ENCODE measurements at regions of chr11 and their contacts with region 1.

Region 1: GRCh38 chr11:66616379-66617154 is at the start of gene RBM14:
- DNase-seq: peak; percentile 99 to 100
- ATAC-seq: peak; percentile 96 to 98
- H3K4me3 ChIP-seq: peak within 1 kb of the TSS; percentile 60
- H3K27ac ChIP-seq: peak within 1 kb of the TSS; percentile 95 to 97
- H3K4me1 ChIP-seq: peaks cover 29% of the 10 kb centered on the region
- CTCF ChIP-seq: no peak
- EP300 ChIP-seq: no peak
- POLR2A ChIP-seq: peak; percentile 94
- RAD21 ChIP-seq: no peak
- polyA plus RNA-seq, gene RBM14: 33.0 and 38.0 TPM in 2 replicates

Region 2: GRCh38 chr11:66545701-66546367 is 70.7 kb before region 1 on chr11 and contains the start of gene ZDHHC24:
- CTCF ChIA-PET with region 1: no interaction called
- POLR2A ChIA-PET with region 1: interaction called, 10 read pairs
- DNase-seq: peak; percentile 97
- ATAC-seq: peak; percentile 89 to 98
- H3K4me3 ChIP-seq: peak within 1 kb of the TSS; percentile 85
- H3K27ac ChIP-seq: peak within 1 kb of the TSS; percentile 85 to 96
- H3K4me1 ChIP-seq: peaks cover 17% of the 10 kb centered on the region
- CTCF ChIP-seq: no peak
- EP300 ChIP-seq: no peak
- POLR2A ChIP-seq: peak; percentile 71
- RAD21 ChIP-seq: no peak
- polyA plus RNA-seq, gene ZDHHC24: 8.4 and 8.6 TPM in 2 replicates

Region 3: DNA sequence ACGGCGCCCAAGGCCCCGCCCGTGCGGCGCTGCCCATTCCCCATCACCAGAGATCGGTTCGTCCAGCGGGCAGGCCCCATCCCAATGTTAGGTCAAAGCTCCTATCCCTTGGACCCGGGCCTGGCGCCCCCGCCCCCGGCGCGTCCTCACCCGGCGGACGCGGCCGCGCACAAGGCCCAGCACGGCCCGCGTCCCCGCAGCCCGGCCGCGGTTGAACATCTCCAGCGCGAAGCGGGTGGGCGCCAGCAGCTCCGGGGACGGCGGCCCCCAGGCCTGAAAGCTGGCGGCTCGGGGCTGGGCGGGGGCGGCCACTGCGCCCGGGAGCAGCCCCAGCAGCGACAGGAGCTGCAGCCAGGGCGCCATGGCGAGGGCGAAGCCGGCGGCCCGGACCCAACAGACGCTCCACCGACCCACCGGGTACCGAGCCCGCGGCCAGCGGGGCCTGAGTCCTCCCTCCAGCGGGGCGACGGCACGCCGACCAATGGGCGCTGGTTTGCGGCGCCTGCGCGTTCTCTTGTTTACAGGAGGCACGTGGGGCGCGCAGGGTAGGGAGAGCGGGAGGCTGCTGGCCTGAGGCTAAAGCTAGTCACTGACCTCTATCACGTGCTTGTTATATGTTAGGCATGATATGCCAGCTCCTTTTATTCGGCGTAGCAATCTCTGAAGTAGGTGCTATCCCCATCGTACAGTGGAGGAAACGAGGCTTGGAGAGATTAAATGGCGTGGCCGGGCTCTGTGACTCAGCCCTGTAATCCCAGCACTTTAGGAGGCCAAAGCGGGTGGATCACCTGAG is 48.2 kb before region 1 on chr11 and contains the start of gene CTSF:
- CTCF ChIA-PET with region 1: interaction called, 3 read pairs
- POLR2A ChIA-PET with region 1: interaction called, 10 read pairs
- DNase-seq: peak; percentile 83 to 97
- ATAC-seq: peak; percentile 92 to 95
- H3K4me3 ChIP-seq: peak within 1 kb of the TSS; percentile 68
- H3K27ac ChIP-seq: peak within 1 kb of the TSS; percentile 80 to 87
- H3K4me1 ChIP-seq: peaks cover 5% of the 10 kb centered on the region; the same call in 1 of the 3 replicates
- CTCF ChIP-seq: no peak
- EP300 ChIP-seq: no peak
- POLR2A ChIP-seq: peak; percentile 53
- RAD21 ChIP-seq: no peak
- polyA plus RNA-seq, gene CTSF: 19.2 and 29.1 TPM in 2 replicates

Region 4: DNA sequence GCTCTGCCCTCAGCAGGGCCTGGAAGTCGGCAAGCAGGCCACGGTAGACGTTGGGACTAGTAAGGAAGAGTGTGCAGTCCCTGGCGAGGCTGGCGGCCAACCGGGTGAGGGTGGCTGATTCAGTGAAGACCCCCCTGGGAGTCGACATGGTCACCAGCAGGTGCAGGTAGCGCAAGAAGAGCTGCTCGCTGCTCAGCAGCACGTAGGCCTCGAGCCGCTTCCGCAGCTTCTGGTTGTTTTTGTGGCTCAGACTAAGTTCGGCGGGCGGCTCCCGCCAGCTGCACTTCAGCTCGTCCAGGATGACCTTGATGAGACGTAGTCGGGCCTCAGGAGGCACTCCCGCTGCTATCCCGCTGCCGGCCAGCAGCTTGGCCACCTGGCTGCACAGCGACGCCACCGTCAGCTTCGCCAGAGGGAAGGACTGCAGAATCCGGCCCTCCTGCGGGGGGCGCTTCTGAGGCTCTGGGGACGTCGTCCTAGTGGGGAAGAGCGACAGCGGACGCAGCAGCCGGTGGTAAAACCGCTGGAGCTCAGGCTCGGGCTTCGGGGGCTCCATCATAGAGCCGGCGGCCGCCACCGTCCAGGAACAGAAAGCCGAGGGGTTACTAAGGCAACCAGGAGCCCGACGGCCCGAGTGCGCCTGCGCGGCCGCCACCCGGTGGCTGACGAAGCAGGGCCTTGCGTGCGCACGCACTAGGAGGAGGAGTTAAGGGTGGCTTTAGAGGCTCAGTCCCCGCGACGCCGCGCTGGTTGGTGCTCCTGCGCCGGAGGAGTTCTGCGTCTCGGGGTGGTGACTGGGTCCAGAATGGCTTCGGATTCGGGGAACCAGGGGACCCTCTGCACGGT is 23.9 kb before region 1 on chr11 and contains the starts of genes CCDC87 and CCS:
- CTCF ChIA-PET with region 1: interaction called, 5 read pairs
- POLR2A ChIA-PET with region 1: interaction called, 26 read pairs
- DNase-seq: peak; percentile 96 to 100
- ATAC-seq: peak; percentile 98
- H3K4me3 ChIP-seq: peak within 1 kb of the TSS; percentile 68
- H3K27ac ChIP-seq: peak within 1 kb of the TSS; percentile 89 to 91
- H3K4me1 ChIP-seq: peaks cover 9% of the 10 kb centered on the region; the same call in 2 of the 3 replicates
- CTCF ChIP-seq: peak; percentile 68
- EP300 ChIP-seq: no peak
- POLR2A ChIP-seq: peak; percentile 99
- RAD21 ChIP-seq: peak in 1 of 2 experiments; percentile 45; a peak in 3 of 5 replicates
- polyA plus RNA-seq, gene CCDC87: 0.47 and 0.54 TPM in 2 replicates
- polyA plus RNA-seq, gene CCS: 17.2 and 18.3 TPM in 2 replicates

Region 5: DNA sequence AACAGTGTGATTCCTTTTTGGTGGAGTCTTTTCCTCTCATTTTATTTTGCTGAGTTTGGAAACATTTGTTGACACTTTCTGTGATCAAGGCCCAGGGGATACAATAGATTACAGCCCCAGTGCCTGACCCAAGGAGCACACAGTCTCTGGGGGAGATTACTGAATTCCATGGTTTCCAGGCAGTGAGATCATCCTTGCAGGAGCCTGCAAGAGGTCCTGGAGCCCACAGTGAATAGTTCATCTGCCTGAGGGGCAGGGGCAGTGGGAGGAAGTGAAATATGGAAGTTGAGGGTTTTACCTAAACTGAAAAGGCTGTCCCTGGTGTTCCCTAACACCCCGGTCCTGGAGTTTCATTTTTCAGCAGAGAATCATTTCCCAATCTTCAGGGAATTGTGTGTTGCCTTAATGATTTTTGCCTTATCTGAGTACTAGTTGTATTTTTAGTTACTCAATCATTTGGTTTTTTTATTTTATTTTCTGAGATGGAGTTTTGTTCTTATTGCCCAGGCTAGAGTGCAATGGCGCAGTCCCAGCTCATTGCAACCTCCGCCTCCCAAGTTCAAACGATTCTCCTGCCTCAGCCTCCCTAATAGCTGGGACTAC is 15.8 kb before region 1 on chr11:
- CTCF ChIA-PET with region 1: interaction called, 4 read pairs
- POLR2A ChIA-PET with region 1: interaction called, 44 read pairs
- DNase-seq: no peak
- ATAC-seq: no peak
- H3K4me3 ChIP-seq: no peak overlapping the region
- H3K27ac ChIP-seq: no peak overlapping the region
- H3K4me1 ChIP-seq: 0 out of 3 replicates have a peak, but pooled peaks cover 3% of the 10 kb centered on the region
- CTCF ChIP-seq: no peak
- EP300 ChIP-seq: no peak
- POLR2A ChIP-seq: no peak
- RAD21 ChIP-seq: no peak

Region 6: GRCh38 chr11:66638177-66639065 is 21.9 kb after region 1 on chr11 and contains the start of gene RBM4:
- CTCF ChIA-PET with region 1: interaction called, 8 read pairs
- POLR2A ChIA-PET with region 1: interaction called, 60 read pairs
- DNase-seq: peak; percentile 99 to 100
- ATAC-seq: peak; percentile 95
- H3K4me3 ChIP-seq: peak within 1 kb of the TSS; percentile 71
- H3K27ac ChIP-seq: peak within 1 kb of the TSS; percentile 88 to 91
- H3K4me1 ChIP-seq: peaks cover 44% of the 10 kb centered on the region
- CTCF ChIP-seq: 0 out of 3 replicates have a peak, but pooled peaks have one; percentile 6
- EP300 ChIP-seq: no peak
- POLR2A ChIP-seq: peak; percentile 73
- RAD21 ChIP-seq: no peak
- polyA plus RNA-seq, gene RBM4: 190 and 264 TPM in 2 replicates

Region 7: GRCh38 chr11:66697988-66698387 is 81.4 kb after region 1 on chr11:
- CTCF ChIA-PET with region 1: no interaction called
- POLR2A ChIA-PET with region 1: no interaction called
- DNase-seq: no peak
- ATAC-seq: no peak
- H3K4me3 ChIP-seq: no peak overlapping the region
- H3K27ac ChIP-seq: no peak overlapping the region
- H3K4me1 ChIP-seq: peaks cover 5% of the 10 kb centered on the region; the same call in 1 of the 3 replicates
- CTCF ChIP-seq: no peak
- EP300 ChIP-seq: no peak
- POLR2A ChIP-seq: no peak
- RAD21 ChIP-seq: no peak

Region 8: DNA sequence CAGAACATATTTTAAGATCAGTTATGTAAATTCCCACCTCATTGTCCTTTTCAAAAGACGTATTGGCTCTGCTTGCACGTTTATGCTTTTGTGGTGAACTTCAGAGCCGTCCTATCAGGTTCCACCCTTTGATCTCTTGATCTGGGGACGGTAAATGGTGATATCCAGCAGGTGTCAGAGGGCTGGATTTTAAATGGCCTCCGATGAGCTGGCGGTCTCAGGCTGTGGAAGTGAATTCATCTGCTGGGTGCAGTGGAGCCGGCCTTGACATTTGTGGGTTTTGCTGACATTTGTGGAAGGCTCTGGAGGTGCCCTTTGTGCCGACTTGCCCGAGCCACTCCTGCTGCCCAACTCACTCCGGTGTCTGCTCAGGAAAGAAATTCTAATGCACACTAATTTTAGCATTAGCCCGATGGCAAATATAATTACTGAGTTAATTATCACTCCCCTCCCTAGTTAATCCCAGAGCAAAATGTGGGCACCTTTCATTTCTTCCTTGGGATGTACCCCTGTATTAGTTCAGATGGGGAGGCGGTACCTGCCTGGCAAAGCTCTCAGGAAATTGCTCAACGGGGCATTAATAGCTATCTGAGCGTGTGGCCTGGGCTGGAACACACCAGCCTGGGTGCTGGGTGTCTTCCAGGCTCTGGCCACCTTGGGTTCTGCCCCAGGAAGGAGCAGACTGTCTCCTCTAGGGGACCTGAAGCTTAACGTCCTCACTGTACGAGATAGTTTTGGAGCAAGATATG is 1704.9 kb after region 1 on chr11:
- CTCF ChIA-PET with region 1: no interaction called
- POLR2A ChIA-PET with region 1: interaction called, 12 read pairs
- DNase-seq: no peak
- ATAC-seq: peak; percentile 34 to 35; a peak in 4 of 6 replicates
- H3K4me3 ChIP-seq: no peak overlapping the region
- H3K27ac ChIP-seq: peak overlapping the region in 1 of 2 experiments; percentile 48; a peak in 3 of 6 replicates
- H3K4me1 ChIP-seq: peaks cover 32% of the 10 kb centered on the region
- CTCF ChIP-seq: no peak
- EP300 ChIP-seq: no peak
- POLR2A ChIP-seq: no peak
- RAD21 ChIP-seq: no peak